Esophagus muscularis mucosa (tissue), 4 donors: ENCODE measurements at regions of chr1 and their contacts with region 1.

Region 1: GRCh38 chr1:234918181-234918841 is 210.3 kb downstream of the TOMM20 start:
- DNase-seq: no peak
- H3K4me3 ChIP-seq: no peak overlapping the region
- H3K27ac ChIP-seq: peak overlapping the region; percentile 79 to 85 (median 82)
- H3K4me1 ChIP-seq: peaks cover 61 to 73% (median 68%) of the 10 kb centered on the region in 4 donors
- H3K27me3 ChIP-seq: no peaks in the 10 kb centered on the region
- CTCF ChIP-seq: no peak
- EP300 ChIP-seq: peak; percentile 65
- POLR2A ChIP-seq: no peak

Region 2: GRCh38 chr1:234683861-234684632 is 234.3 kb before region 1 on chr1:
- intact Hi-C with region 1: loop called (anchors 5 kb)
- DNase-seq: peak; percentile 82
- H3K4me3 ChIP-seq: no peak overlapping the region
- H3K27ac ChIP-seq: peak overlapping the region; percentile 75 to 85 (median 80)
- H3K4me1 ChIP-seq: peaks cover 12 to 34% (median 27%) of the 10 kb centered on the region in 4 donors
- H3K27me3 ChIP-seq: no peaks in the 10 kb centered on the region
- CTCF ChIP-seq: no peak
- EP300 ChIP-seq: no peak
- POLR2A ChIP-seq: no peak

Region 3: DNA sequence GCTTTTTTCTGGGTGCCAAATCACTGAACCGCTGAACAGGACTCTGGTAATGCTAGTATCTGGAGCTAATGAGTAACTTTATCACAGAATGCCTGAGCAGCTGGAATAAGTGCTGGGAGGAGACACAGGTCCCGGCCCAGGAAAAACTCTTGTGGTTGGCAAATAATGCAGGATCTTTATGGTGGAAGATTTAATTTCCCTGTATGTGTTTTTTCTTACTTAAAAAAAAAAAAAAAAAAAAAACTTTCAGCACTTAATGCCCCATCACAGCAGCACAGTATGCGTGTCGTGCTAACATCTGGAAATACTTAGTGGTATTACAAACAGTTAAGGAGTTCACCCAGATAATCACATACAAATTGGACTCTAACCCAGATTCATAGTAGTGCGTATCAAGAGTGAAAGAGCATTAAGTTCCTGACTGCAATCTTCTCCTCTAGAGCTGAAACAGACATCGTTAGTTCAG is 10.3 kb before region 1 on chr1:
- intact Hi-C with region 1: no loop called
- DNase-seq: no peak
- H3K4me3 ChIP-seq: no peak overlapping the region
- H3K27ac ChIP-seq: peak overlapping the region; percentile 44 to 70 (median 50)
- H3K4me1 ChIP-seq: peaks cover 20 to 29% (median 24%) of the 10 kb centered on the region in 4 donors
- H3K27me3 ChIP-seq: no peaks in the 10 kb centered on the region
- CTCF ChIP-seq: no peak
- EP300 ChIP-seq: no peak
- POLR2A ChIP-seq: no peak

Region 4: GRCh38 chr1:234963180-234963903 is 45.0 kb after region 1 on chr1:
- intact Hi-C with region 1: loop called (anchors 5 kb)
- DNase-seq: no peak
- H3K4me3 ChIP-seq: no peak overlapping the region
- H3K27ac ChIP-seq: peak overlapping the region; percentile 69 to 77 (median 76)
- H3K4me1 ChIP-seq: peaks cover 42 to 57% (median 53%) of the 10 kb centered on the region in 4 donors
- H3K27me3 ChIP-seq: no peaks in the 10 kb centered on the region
- CTCF ChIP-seq: no peak
- EP300 ChIP-seq: no peak
- POLR2A ChIP-seq: no peak

Region 5: GRCh38 chr1:235079443-235080296 is 161.4 kb after region 1 on chr1:
- intact Hi-C with region 1: loop called (anchors 5 kb)
- DNase-seq: no peak
- H3K4me3 ChIP-seq: no peak overlapping the region
- H3K27ac ChIP-seq: peak overlapping the region; percentile 49 to 89 (median 84)
- H3K4me1 ChIP-seq: peaks cover 56 to 78% (median 75%) of the 10 kb centered on the region in 4 donors
- H3K27me3 ChIP-seq: no peaks in the 10 kb centered on the region
- CTCF ChIP-seq: no peak
- EP300 ChIP-seq: no peak
- POLR2A ChIP-seq: no peak